HepG2 (cell line): ENCODE measurements at regions of chr13 and their contacts with region 1.

Region 1: GRCh38 chr13:40540328-40541044 is 126.0 kb downstream of the FOXO1 start:
- DNase-seq: peak; percentile 96
- ATAC-seq: peak; percentile 83
- H3K4me3 ChIP-seq: peak overlapping the region in 2 of 3 experiments; percentile 35 to 47; a peak in 2 of 6 replicates
- H3K27ac ChIP-seq: peak overlapping the region; percentile 76
- H3K4me1 ChIP-seq: peaks cover 68% of the 10 kb centered on the region
- H3K27me3 ChIP-seq: no peaks in the 10 kb centered on the region
- CTCF ChIP-seq: no peak
- EP300 ChIP-seq: peak; percentile 61 to 90; a peak in 3 of 4 replicates
- POLR2A ChIP-seq: no peak
- RAD21 ChIP-seq: no peak

Region 2: GRCh38 chr13:40503966-40504591 is 36.4 kb before region 1 on chr13:
- CTCF ChIA-PET with region 1: no interaction called
- POLR2A ChIA-PET with region 1: interaction called, 12 read pairs
- in situ Hi-C with region 1: no loop called
- intact Hi-C with region 1: loop called (anchors 1 kb)
- DNase-seq: peak; percentile 99
- ATAC-seq: peak; percentile 96
- H3K4me3 ChIP-seq: peak overlapping the region in 1 of 3 experiments; percentile 45; a peak in 2 of 6 replicates
- H3K27ac ChIP-seq: peak overlapping the region; percentile 77
- H3K4me1 ChIP-seq: peaks cover 34% of the 10 kb centered on the region
- H3K27me3 ChIP-seq: no peaks in the 10 kb centered on the region
- CTCF ChIP-seq: no peak
- EP300 ChIP-seq: peak; percentile 74 to 79; a peak in 3 of 4 replicates
- POLR2A ChIP-seq: peak in 1 of 2 experiments; percentile 64; a peak in 1 of 4 replicates
- RAD21 ChIP-seq: peak; percentile 31; the same call in 1 of the 2 replicates

Region 3: DNA sequence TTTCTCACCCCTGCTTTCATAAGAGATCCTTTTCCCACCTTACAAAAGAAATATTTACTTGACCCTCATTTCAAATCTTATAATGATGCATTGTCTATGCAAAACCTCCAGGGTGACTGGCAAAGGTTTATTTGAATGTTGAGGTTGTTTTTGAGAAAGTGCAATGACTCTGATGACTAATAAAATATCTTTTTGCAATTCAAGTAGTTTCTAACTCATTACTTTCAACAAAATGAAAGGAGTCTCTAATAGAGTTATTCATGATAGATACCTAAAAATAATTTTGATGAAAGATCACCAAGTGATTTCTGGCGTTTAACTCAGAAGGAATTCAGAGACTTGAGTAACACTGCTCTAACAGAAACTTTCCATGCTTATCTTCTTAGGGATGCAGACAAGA is 18.2 kb before region 1 on chr13:
- CTCF ChIA-PET with region 1: no interaction called
- POLR2A ChIA-PET with region 1: no interaction called
- in situ Hi-C with region 1: no loop called
- intact Hi-C with region 1: no loop called
- DNase-seq: no peak
- ATAC-seq: no peak
- H3K4me3 ChIP-seq: no peak overlapping the region
- H3K27ac ChIP-seq: no peak overlapping the region
- H3K4me1 ChIP-seq: peaks cover 46% of the 10 kb centered on the region
- H3K27me3 ChIP-seq: no peaks in the 10 kb centered on the region
- CTCF ChIP-seq: no peak
- EP300 ChIP-seq: no peak
- POLR2A ChIP-seq: no peak
- RAD21 ChIP-seq: no peak

Region 4: GRCh38 chr13:40770934-40771618 is 230.6 kb after region 1 on chr13 and contains the start of gene MRPS31:
- CTCF ChIA-PET with region 1: no interaction called
- POLR2A ChIA-PET with region 1: no interaction called
- in situ Hi-C with region 1: loop called (anchors 10 kb)
- intact Hi-C with region 1: no loop called
- DNase-seq: peak; percentile 92
- ATAC-seq: peak; percentile 99
- H3K4me3 ChIP-seq: peak within 1 kb of the TSS; percentile 86 to 97 (median 94)
- H3K27ac ChIP-seq: peak within 1 kb of the TSS; percentile 74
- H3K4me1 ChIP-seq: peaks cover 53% of the 10 kb centered on the region
- H3K27me3 ChIP-seq: no peaks in the 10 kb centered on the region; a peak in 1 of 5 replicates
- CTCF ChIP-seq: peak; percentile 44
- EP300 ChIP-seq: peak; percentile 50 to 73; a peak in 3 of 4 replicates
- POLR2A ChIP-seq: peak; percentile 79 to 97
- RAD21 ChIP-seq: peak; percentile 72
- total RNA-seq, gene MRPS31: 34.1 and 43.5 TPM in 2 replicates